Caco-2 (cell line): ENCODE measurements at regions of chr14 and their contacts with region 1.

Region 1: DNA sequence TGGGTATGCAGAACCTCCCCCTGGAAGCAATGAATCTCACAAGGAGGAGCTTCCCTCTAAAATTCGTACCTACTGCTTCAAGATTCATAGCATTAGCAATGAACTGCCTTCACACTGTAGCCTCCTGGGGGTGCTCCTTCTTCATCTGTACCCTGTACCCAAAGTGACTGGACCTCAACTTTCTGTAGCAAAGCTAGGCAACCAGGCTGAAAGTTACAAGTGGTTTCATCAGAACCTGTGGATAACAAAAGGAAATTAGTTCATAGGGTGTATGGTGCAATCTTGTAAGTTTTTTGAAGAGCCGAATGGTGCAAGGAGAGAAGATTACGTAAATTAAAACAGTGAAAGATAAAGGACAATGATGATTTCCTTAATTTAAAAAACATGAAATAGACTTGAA is 1541.7 kb upstream of the FLRT2 start:
- DNase-seq: peak in 1 of 2 experiments; percentile 32
- H3K4me3 ChIP-seq: no peak overlapping the region
- H3K4me3 Mint-ChIP-seq: no peak overlapping the region
- H3K27ac Mint-ChIP-seq: peak overlapping the region; percentile 17
- H3K4me1 ChIP-seq: no peaks in the 10 kb centered on the region
- H3K4me1 Mint-ChIP-seq: peaks cover 6% of the 10 kb centered on the region
- H3K27me3 ChIP-seq: no peaks in the 10 kb centered on the region
- H3K27me3 Mint-ChIP-seq: no peaks in the 10 kb centered on the region
- CTCF ChIP-seq: no peak

Region 2: DNA sequence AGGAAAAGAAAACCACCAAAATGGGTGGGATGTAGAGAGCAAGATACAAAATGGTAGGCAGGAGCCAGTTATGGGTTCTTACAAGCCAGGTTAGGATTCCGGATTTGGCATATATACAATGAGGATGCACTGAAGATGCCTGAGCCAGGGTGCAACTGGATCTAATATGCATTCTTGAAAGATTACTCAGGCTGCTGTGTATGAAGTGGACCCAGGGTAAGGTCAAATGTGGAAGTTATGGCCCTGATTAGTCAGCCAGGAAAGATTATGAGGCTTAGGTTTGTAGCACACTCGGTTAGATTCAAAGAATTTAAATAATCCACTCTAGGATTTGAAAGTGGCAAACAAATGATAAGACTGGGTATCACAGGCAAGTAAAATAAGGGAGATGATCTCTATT is 209.0 kb before region 1 on chr14:
- CTCF ChIA-PET with region 1: no interaction called
- POLR2A ChIA-PET with region 1: no interaction called
- intact Hi-C with region 1: no loop called
- DNase-seq: no peak
- H3K4me3 ChIP-seq: no peak overlapping the region
- H3K4me3 Mint-ChIP-seq: no peak overlapping the region
- H3K27ac Mint-ChIP-seq: no peak overlapping the region
- H3K4me1 ChIP-seq: 0 out of 2 replicates have a peak, but pooled peaks cover 5% of the 10 kb centered on the region
- H3K4me1 Mint-ChIP-seq: no peaks in the 10 kb centered on the region
- H3K27me3 ChIP-seq: no peaks in the 10 kb centered on the region
- H3K27me3 Mint-ChIP-seq: no peaks in the 10 kb centered on the region
- CTCF ChIP-seq: no peak

Region 3: DNA sequence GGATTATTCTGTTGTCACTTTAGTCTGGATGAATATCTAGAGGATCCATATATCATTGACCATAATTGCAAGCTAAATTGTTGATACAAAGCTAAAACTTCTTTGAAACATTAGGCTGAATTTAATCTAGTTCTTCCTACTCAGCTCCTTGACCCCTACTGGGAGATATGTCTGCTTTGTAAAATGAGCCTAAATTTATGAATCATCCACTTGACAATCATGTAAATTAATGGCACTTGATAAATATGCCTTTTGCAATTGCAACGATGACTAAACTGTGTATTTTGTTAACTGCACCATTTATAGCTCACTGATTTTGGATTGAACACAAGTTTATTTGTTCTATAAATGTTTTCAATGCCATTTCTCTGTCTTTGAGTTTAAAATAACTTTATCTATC is 74.8 kb before region 1 on chr14:
- CTCF ChIA-PET with region 1: no interaction called
- POLR2A ChIA-PET with region 1: no interaction called
- intact Hi-C with region 1: loop called (anchors 10 kb)
- DNase-seq: no peak
- H3K4me3 ChIP-seq: no peak overlapping the region
- H3K4me3 Mint-ChIP-seq: no peak overlapping the region
- H3K27ac Mint-ChIP-seq: no peak overlapping the region
- H3K4me1 ChIP-seq: peaks cover 23% of the 10 kb centered on the region
- H3K4me1 Mint-ChIP-seq: peaks cover 20% of the 10 kb centered on the region
- H3K27me3 ChIP-seq: no peaks in the 10 kb centered on the region
- H3K27me3 Mint-ChIP-seq: no peaks in the 10 kb centered on the region
- CTCF ChIP-seq: no peak